HEK293 (cell line): ENCODE measurements at regions of chr1 and their contacts with region 1.

Region 1: GRCh38 chr1:185681034-185681633 is 53.1 kb upstream of the HMCN1 start:
- H3K4me3 ChIP-seq: no peak overlapping the region
- H3K27ac ChIP-seq: no peak overlapping the region
- H3K4me1 ChIP-seq: no peaks in the 10 kb centered on the region
- CTCF ChIP-seq: no peak

Region 2: DNA sequence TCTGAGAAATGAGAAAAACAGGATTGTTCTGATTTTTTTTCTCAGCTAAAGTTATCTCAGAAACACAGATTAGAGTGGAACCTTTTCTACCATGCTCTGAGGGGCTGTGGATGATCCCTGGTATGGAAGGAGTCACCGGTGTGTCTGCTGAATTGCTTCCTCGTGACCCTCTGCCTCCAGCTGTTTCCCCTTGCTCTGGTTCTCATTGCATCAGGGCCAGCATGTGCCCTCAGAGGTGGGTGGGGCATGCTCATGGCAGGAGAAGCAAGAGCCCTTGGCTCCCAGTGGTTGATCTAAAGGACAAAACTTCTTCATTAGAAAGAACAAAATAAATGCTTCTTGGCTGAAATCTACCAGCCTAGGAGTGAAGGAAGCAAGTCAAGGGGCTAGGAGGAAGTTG is 130.1 kb before region 1 on chr1:
- CTCF ChIA-PET with region 1: no interaction called
- POLR2A ChIA-PET with region 1: no interaction called
- H3K4me3 ChIP-seq: no peak overlapping the region
- H3K27ac ChIP-seq: no peak overlapping the region
- H3K4me1 ChIP-seq: peaks cover 2% of the 10 kb centered on the region; the same call in 1 of the 2 replicates
- CTCF ChIP-seq: no peak

Region 3: DNA sequence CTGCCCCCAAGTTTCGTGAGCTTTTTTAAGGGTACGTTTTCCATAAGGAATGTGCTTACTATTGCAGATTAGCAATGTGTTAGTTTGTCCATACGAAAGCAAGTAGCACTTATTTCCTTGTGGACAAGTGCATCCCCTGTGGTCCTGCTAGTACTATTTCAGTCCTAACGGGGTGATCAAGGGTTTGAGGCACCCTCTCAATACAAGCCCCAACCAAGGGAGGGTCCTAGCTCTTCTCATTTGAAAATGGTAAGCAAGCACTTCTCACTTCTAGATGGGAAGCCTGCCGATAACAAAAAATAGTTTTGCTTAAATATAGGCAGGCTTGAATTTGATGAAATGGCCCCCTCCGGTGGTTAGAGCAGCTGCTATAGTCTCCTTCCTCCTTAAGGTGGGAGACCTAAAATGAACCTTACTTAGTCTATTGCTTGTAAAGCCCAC is 10.9 kb before region 1 on chr1:
- CTCF ChIA-PET with region 1: interaction called, 30 read pairs
- POLR2A ChIA-PET with region 1: no interaction called
- H3K4me3 ChIP-seq: no peak overlapping the region
- H3K27ac ChIP-seq: no peak overlapping the region
- H3K4me1 ChIP-seq: 0 out of 2 replicates have a peak, but pooled peaks cover 3% of the 10 kb centered on the region
- CTCF ChIP-seq: peak; percentile 45

Region 4: GRCh38 chr1:185694081-185694480 is 12.9 kb after region 1 on chr1:
- CTCF ChIA-PET with region 1: interaction called, 17 read pairs
- POLR2A ChIA-PET with region 1: no interaction called
- H3K4me3 ChIP-seq: no peak overlapping the region
- H3K27ac ChIP-seq: no peak overlapping the region
- H3K4me1 ChIP-seq: no peaks in the 10 kb centered on the region
- CTCF ChIP-seq: no peak

Region 5: DNA sequence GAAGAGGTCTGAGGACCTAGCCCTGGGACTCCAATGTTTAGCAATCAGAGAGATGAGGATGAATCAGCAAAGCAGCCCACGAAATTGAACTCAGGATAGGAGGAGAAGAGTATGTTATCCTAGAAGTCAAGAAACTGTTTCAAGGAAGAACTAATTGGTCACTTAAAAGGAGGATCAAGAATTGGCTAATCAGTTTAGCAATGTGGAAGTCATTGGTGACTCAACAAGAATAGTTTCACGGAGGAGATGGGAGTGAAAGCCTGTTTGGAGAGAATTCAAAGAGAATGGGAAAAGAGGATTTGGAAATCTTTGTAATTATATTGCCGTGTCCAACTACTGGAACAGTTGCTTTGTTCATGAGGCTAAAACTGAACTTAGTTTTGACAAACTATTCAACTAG is 60.4 kb after region 1 on chr1:
- CTCF ChIA-PET with region 1: no interaction called
- POLR2A ChIA-PET with region 1: no interaction called
- H3K4me3 ChIP-seq: no peak overlapping the region
- H3K27ac ChIP-seq: no peak overlapping the region
- H3K4me1 ChIP-seq: no peaks in the 10 kb centered on the region
- CTCF ChIP-seq: no peak

Region 6: DNA sequence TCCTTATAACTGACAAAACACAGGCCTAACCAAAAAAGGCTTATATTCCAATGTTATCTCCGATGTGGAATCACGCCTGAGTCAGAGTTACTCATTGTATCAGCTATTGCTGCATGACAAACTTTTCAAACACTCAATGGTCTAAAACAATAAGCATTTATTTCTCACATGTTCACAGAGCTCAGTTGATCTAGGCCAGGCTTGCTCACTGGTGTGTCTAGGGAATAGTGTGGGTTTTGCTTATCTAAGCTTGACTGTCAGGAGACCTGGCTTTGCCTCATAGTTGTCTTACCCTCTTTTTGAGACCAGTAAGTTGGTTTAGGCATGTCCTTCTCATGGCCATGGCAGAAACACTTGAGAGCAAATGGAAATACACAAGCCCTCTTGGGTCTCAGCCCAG is 183.8 kb after region 1 on chr1:
- CTCF ChIA-PET with region 1: no interaction called
- POLR2A ChIA-PET with region 1: no interaction called
- H3K4me3 ChIP-seq: no peak overlapping the region
- H3K27ac ChIP-seq: no peak overlapping the region
- H3K4me1 ChIP-seq: 0 out of 2 replicates have a peak, but pooled peaks cover 4% of the 10 kb centered on the region
- CTCF ChIP-seq: no peak

Region 7: DNA sequence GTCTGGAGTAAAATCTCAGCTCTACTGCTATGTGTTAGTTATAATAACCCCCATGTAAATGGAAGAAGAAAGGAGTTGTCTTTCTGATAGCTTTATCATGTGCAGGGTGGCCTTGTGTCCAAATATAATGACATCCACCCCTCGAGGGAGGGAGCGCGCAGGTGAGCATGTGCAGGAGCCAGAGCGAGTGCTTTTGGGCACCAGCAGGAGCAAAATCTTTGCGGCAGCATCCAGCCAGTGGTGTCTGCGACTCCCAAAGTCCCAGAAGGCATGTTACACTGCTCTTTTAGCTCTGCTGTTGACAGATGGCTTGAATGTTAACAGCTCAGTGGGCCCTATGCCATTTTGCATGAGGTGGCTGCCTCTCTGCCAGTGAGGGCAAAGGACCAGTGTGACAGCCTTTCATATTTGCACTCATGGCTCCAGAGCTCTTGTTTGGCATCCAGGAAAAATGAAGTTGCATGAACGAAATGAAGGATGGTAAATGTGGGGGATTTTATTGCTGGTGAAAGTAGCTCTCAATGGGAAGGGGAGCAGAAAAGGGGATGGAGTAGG is 199.7 kb after region 1 on chr1:
- CTCF ChIA-PET with region 1: no interaction called
- POLR2A ChIA-PET with region 1: no interaction called
- H3K4me3 ChIP-seq: no peak overlapping the region
- H3K27ac ChIP-seq: no peak overlapping the region
- H3K4me1 ChIP-seq: no peaks in the 10 kb centered on the region
- CTCF ChIP-seq: no peak